ENCODE measurements at regions of chr1 and their contacts with region 1.

Region 1: GRCh38 chr1:237851210-237851845 is 39.4 kb downstream of the ZP4 start:
- H3K4me3 ChIP-seq: no peak overlapping the region
- H3K27ac ChIP-seq: no peak overlapping the region
- H3K4me1 ChIP-seq: no peaks in the 10 kb centered on the region
- CTCF ChIP-seq: peak; percentile 30; the same call in 1 of the 2 replicates

Region 2: DNA sequence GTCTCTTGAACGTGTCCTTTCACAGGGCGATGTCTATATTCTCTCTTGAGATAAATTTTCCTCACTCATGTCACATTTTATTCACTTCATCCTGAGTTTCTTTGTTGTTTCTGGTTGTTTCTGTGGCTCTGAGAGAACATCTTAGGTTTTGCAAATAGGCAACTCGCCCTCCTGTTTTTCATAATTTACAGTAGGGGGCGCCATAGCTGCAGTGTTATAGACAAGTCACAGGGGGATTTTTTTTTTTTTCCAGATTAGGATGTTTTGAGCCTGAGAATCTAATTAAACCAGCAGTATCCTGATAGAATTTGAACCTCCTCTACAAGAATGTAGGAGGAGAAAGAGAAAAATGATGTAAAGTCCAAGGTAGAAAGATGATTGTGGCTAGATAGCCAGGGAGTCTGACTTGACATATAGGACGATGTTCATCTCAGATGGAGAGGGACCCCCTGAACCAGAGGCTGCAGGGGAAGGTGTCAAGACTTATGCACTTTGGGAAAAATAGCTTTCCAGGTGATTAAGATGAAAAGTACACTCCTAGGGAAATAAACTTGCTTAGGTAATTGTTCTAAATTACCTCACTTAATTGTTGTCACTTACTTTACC is 36.9 kb before region 1 on chr1:
- CTCF ChIA-PET with region 1: interaction called, 11 read pairs
- POLR2A ChIA-PET with region 1: no interaction called
- H3K4me3 ChIP-seq: no peak overlapping the region
- H3K27ac ChIP-seq: no peak overlapping the region
- H3K4me1 ChIP-seq: no peaks in the 10 kb centered on the region
- CTCF ChIP-seq: 0 out of 2 replicates have a peak, but pooled peaks have one; percentile 13

Region 3: GRCh38 chr1:237834461-237834860 is 16.9 kb before region 1 on chr1:
- CTCF ChIA-PET with region 1: interaction called, 39 read pairs
- POLR2A ChIA-PET with region 1: no interaction called
- H3K4me3 ChIP-seq: no peak overlapping the region
- H3K27ac ChIP-seq: no peak overlapping the region
- H3K4me1 ChIP-seq: no peaks in the 10 kb centered on the region
- CTCF ChIP-seq: no peak

Region 4: GRCh38 chr1:237894131-237894530 is 42.8 kb after region 1 on chr1:
- CTCF ChIA-PET with region 1: no interaction called
- POLR2A ChIA-PET with region 1: no interaction called
- H3K4me3 ChIP-seq: no peak overlapping the region
- H3K27ac ChIP-seq: no peak overlapping the region
- H3K4me1 ChIP-seq: no peaks in the 10 kb centered on the region
- CTCF ChIP-seq: no peak

Region 5: GRCh38 chr1:237938553-237938952 is 87.2 kb after region 1 on chr1:
- CTCF ChIA-PET with region 1: interaction called, 24 read pairs
- POLR2A ChIA-PET with region 1: no interaction called
- H3K4me3 ChIP-seq: no peak overlapping the region
- H3K27ac ChIP-seq: no peak overlapping the region
- H3K4me1 ChIP-seq: no peaks in the 10 kb centered on the region
- CTCF ChIP-seq: 0 out of 2 replicates have a peak, but pooled peaks have one; percentile 31

Region 6: GRCh38 chr1:238232084-238232710 is 380.9 kb after region 1 on chr1:
- CTCF ChIA-PET with region 1: interaction called, 13 read pairs
- POLR2A ChIA-PET with region 1: no interaction called
- H3K4me3 ChIP-seq: no peak overlapping the region
- H3K27ac ChIP-seq: no peak overlapping the region
- H3K4me1 ChIP-seq: no peaks in the 10 kb centered on the region
- CTCF ChIP-seq: no peak

Measured in HEK293 (cell line).